Heart left ventricle (tissue), 16 donors: ENCODE measurements at regions of chr3 and their contacts with region 1.

Region 1: DNA sequence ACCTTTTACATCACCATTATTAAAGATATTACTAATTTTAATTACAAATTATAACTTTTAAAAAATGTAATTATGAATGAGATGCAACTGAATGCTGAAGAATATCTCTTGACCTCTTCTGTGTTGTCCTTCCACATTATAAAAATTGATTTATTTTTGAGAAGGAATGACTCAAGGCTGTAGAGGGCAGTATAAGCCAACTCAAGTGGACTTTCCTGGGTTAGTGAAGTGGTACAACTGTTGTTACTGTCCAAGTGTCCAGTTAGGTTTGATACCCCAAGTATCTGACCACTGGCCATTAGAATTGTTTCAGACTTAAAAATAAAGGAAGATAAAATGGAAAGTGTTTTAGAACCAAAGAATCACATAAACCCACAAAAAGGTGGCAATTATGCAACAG is 51.9 kb downstream of the BBX start:
- DNase-seq: no peak
- ATAC-seq: peak in 3 of 4 donors; percentile 67 to 74 (median 69)
- H3K4me3 ChIP-seq: no peak overlapping the region
- H3K27ac ChIP-seq: no peak overlapping the region
- H3K4me1 ChIP-seq: peaks cover 0 to 6% (median 0%) of the 10 kb centered on the region in 12 donors
- H3K27me3 ChIP-seq: no peaks in the 10 kb centered on the region
- CTCF ChIP-seq: peak; percentile 46 to 77 (median 60)
- POLR2A ChIP-seq: no peak

Region 2: DNA sequence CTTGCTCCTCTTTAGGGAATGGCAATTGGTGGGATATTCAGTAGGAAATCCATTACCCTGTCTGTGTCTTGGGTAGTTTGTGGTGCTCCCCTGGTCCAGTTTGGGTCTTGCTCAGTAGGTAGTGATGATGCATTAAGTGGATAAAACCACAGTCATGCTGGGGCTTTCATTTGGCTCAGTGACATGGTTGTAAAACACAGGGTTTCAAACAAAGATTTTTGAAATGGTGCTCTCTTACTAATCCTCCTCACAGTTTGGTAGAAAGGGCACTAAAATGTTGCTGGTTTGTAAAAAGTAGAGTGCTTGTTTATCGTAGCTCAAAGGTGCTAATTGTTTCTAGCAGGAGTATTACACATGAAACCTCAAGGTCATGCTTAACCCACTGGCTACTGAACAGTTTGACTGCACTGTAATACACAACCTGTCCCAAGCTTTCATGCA is 28.9 kb before region 1 on chr3:
- intact Hi-C with region 1: no loop called
- DNase-seq: no peak
- ATAC-seq: peak in 1 of 4 donors; percentile 48
- H3K4me3 ChIP-seq: no peak overlapping the region
- H3K27ac ChIP-seq: no peak overlapping the region
- H3K4me1 ChIP-seq: peaks cover 0 to 9% (median 0%) of the 10 kb centered on the region in 12 donors
- H3K27me3 ChIP-seq: no peaks in the 10 kb centered on the region
- CTCF ChIP-seq: no peak
- POLR2A ChIP-seq: no peak

Region 3: DNA sequence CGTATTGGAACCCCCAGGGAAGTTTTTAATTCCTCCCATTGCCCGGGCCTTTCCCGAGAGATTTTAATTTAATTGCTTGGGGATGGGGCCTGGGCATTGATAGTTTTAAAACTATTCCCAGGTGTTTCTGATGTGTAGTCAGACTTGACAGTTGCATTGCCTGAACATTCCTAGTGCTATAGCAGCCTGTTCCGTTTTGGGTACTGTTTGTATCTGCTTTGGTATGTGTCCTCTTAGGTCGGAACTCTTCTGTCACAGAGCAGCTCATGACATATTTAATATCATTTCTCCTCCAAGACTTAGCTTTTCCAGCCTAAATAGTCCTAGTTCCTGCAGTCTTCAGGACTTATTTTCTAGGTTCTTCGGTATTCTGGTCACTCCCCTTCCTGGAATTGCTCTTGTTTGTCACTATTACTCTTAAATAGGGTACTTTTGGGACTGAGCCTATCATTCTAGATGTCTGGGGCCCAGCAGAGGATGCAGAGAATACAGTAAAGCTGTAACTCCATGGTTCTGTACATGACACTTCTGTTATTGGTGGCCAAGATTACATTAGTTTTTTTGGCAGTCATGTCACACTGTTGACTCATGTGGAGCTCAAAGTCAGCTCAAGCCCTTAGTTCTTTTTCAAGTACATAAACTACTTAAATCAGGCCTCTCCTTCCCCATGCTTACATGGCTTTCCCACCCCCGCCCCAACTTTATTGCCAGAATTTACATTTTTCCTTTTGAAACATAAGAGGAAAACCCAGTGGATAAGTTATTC is 29.6 kb after region 1 on chr3:
- intact Hi-C with region 1: no loop called
- DNase-seq: no peak
- ATAC-seq: peak; percentile 87 to 92 (median 90)
- H3K4me3 ChIP-seq: no peak overlapping the region
- H3K27ac ChIP-seq: peak overlapping the region; percentile 17 to 89 (median 68)
- H3K4me1 ChIP-seq: peaks cover 0 to 42% (median 25%) of the 10 kb centered on the region in 12 donors
- H3K27me3 ChIP-seq: no peaks in the 10 kb centered on the region
- CTCF ChIP-seq: no peak
- POLR2A ChIP-seq: no peak

Region 4: GRCh38 chr3:107660306-107660976 is 85.8 kb after region 1 on chr3:
- intact Hi-C with region 1: loop called in 4 of 10 experiments (anchors 5 to 10 kb)
- DNase-seq: no peak
- ATAC-seq: peak in 1 of 4 donors; percentile 38
- H3K4me3 ChIP-seq: no peak overlapping the region
- H3K27ac ChIP-seq: no peak overlapping the region
- H3K4me1 ChIP-seq: peaks cover 0 to 37% (median 27%) of the 10 kb centered on the region in 12 donors
- H3K27me3 ChIP-seq: no peaks in the 10 kb centered on the region
- CTCF ChIP-seq: peak; percentile 33 to 71 (median 62)
- POLR2A ChIP-seq: no peak

Region 5: GRCh38 chr3:107740992-107741896 is 166.6 kb after region 1 on chr3:
- intact Hi-C with region 1: loop called in 7 of 10 experiments (anchors 5 to 10 kb)
- DNase-seq: no peak
- ATAC-seq: no peak
- H3K4me3 ChIP-seq: no peak overlapping the region
- H3K27ac ChIP-seq: no peak overlapping the region
- H3K4me1 ChIP-seq: peaks cover 0 to 7% (median 0%) of the 10 kb centered on the region in 12 donors
- H3K27me3 ChIP-seq: no peaks in the 10 kb centered on the region
- CTCF ChIP-seq: peak; percentile 29 to 73 (median 57)
- POLR2A ChIP-seq: no peak

Region 6: DNA sequence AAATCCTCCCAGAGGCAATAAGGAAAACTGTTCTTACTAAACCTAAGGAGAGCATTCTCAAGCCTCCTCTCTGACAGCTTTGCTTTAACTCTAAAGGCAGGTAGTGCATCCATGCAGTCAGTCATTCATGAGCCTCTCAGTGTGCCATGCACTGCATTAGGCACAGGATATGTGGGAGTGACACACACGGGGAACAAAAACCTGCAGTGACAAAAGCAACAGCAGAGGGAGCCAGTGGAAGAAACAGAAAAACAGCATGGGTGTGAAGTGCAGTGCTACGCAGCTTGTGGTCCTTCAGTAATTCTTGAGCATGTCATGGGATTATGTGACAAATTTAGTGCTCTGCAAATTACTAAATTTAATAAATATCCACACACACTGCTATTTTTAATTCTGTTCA is 178.8 kb after region 1 on chr3:
- intact Hi-C with region 1: loop called in 4 of 10 experiments (anchors 5 to 10 kb)
- DNase-seq: peak in 2 of 5 donors; percentile 9 to 26
- ATAC-seq: peak in 3 of 4 donors; percentile 29 to 70 (median 58)
- H3K4me3 ChIP-seq: no peak overlapping the region
- H3K27ac ChIP-seq: no peak overlapping the region
- H3K4me1 ChIP-seq: no peaks in the 10 kb centered on the region
- H3K27me3 ChIP-seq: no peaks in the 10 kb centered on the region
- CTCF ChIP-seq: peak in 11 of 12 donors; percentile 20 to 48 (median 39)
- POLR2A ChIP-seq: no peak

Region 7: DNA sequence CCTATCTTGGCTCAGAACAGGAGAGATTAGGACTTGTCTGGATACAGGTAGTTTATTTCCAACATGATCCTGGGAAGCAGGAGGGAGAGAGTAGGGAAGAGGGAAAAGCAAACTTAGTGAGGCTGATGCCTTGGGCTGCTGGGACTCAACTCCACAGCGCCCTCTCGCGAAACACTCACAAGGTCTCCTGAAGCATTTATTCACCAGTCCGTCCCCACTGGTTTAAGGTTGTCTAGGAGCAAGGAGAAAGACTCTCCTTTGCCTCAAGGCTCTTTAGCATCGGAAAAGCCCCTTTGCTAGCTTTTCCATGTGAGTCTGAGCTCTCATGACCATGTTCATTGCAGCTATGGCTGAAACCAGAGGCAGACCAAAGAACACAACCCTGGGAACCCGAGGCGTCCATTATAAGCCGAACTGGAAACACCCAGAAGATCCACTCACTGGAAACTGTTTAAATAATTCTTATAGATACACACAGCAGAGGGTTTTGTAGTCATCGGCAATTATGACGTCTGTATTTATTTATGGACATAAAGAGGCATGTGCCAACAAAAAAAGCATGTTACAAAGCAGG is 271.7 kb after region 1 on chr3:
- intact Hi-C with region 1: loop called in 2 of 10 experiments (anchors 10 kb)
- DNase-seq: peak; percentile 35 to 65 (median 57)
- ATAC-seq: peak in 3 of 4 donors; percentile 68 to 86 (median 72)
- H3K4me3 ChIP-seq: no peak overlapping the region
- H3K27ac ChIP-seq: no peak overlapping the region
- H3K4me1 ChIP-seq: peaks cover 0 to 5% (median 0%) of the 10 kb centered on the region in 12 donors
- H3K27me3 ChIP-seq: no peaks in the 10 kb centered on the region
- CTCF ChIP-seq: peak; percentile 37 to 72 (median 52)
- POLR2A ChIP-seq: no peak

Region 8: DNA sequence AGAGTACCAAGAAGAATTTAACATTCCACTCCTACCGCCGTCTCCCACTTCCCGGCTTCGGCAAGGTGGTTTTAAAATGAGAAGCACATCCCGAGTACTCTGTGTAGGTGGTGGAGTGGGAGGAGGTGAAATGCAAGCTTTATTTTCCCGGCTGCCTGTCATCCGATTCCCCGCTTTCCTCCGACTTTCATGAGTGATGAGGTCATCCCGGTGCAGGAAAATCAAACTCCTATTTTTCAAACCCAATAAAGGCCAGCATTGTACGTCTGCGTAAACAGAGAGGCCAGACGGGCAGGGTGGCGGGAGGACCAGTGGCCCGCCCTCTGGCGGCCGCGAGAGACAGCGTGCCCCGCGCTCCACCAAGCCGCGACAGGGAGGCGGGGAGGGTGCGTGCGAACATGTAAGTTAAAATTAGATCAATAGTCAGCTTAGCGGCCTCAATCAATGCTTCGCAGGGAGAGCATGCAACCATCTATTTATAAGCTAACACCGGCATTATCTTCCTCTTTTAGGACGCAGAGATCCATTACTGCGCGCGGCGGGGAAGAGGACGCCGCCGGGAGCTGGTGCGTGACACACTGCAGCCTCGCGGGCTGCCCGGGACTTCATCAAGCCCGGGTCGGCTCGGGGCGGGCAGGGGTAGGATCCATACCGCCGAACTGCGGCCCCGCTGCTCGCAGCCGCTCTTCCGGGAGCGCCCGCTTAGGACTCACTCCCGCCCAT is 352.9 kb after region 1 on chr3:
- intact Hi-C with region 1: loop called in 5 of 10 experiments (anchors 5 to 10 kb)
- DNase-seq: peak; percentile 59 to 84 (median 65)
- ATAC-seq: peak; percentile 85 to 99 (median 97)
- H3K4me3 ChIP-seq: peak overlapping the region; percentile 35 to 78 (median 61)
- H3K27ac ChIP-seq: peak overlapping the region in 1 of 12 donors; percentile 29
- H3K4me1 ChIP-seq: peaks cover 0 to 18% (median 7%) of the 10 kb centered on the region in 12 donors
- H3K27me3 ChIP-seq: peaks cover 0 to 15% (median 0%) of the 10 kb centered on the region in 9 donors
- CTCF ChIP-seq: peak; percentile 82 to 97 (median 93)
- POLR2A ChIP-seq: no peak